Testis (tissue), 5 donors: ENCODE measurements at regions of chr9 and their contacts with region 1.

Region 1: GRCh38 chr9:98034593-98035546 is 21.7 kb upstream of the NANS start:
- DNase-seq: peak; percentile 92
- H3K4me3 ChIP-seq: no peak overlapping the region
- H3K27ac ChIP-seq: no peak overlapping the region
- H3K4me1 ChIP-seq: peaks cover 6% of the 10 kb centered on the region
- H3K27me3 ChIP-seq: no peaks in the 10 kb centered on the region
- CTCF ChIP-seq: peak; percentile 47 to 81 (median 70)
- POLR2A ChIP-seq: no peak

Region 2: DNA sequence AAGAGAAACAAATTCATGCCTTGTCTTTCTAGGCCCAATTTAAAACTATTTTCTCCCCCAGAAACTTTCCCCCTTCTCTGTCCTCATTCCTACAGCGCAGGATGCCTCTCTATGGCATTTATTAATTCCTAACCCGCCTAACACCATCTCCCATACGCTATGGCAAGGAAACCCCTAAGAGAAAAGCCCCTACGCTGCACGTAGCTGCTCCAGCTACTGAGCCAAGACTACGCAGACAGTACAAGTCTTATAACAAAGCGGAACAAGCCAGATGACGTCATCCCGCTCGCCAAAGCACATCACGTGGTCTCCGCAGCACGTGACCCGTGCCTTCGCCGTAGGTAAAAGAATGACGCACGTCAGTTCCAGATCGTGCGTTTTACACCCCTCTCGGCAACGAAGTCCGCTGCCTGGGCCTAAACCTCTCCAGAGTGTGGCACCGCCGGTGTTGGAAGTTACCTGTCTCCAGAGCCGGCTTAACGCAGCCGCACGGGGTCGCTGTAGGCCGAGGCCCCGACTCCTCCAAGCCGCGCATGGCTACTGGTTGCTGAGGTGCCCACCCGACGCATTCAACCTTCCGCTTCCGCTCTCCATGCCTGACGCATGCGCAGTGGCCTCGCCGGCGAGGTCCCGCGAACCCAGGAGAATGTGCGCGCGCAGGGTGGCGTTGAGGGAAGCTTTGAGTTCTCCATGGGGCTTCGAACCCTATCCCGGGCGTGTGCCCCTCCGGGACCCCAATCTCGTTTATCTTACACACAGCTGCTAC is 112.7 kb before region 1 on chr9 and contains the start of gene TRMO:
- intact Hi-C with region 1: loop called (anchors 10 kb)
- DNase-seq: peak; percentile 99
- H3K4me3 ChIP-seq: peak within 1 kb of the TSS; percentile 57 to 67
- H3K27ac ChIP-seq: peak within 1 kb of the TSS; percentile 96 to 99
- H3K4me1 ChIP-seq: peaks cover 9% of the 10 kb centered on the region
- H3K27me3 ChIP-seq: no peaks in the 10 kb centered on the region
- CTCF ChIP-seq: peak; percentile 63 to 84 (median 84)
- POLR2A ChIP-seq: peak; percentile 43
- total RNA-seq, gene TRMO: 33.2 to 40.1 TPM

Region 3: GRCh38 chr9:98380065-98380681 is 345.3 kb after region 1 on chr9:
- intact Hi-C with region 1: no loop called
- DNase-seq: peak; percentile 20
- H3K4me3 ChIP-seq: no peak overlapping the region
- H3K27ac ChIP-seq: no peak overlapping the region
- H3K4me1 ChIP-seq: no peaks in the 10 kb centered on the region
- H3K27me3 ChIP-seq: no peaks in the 10 kb centered on the region
- CTCF ChIP-seq: no peak
- POLR2A ChIP-seq: no peak